ENCODE measurements at regions of chr11 and their contacts with region 1.

Region 1: DNA sequence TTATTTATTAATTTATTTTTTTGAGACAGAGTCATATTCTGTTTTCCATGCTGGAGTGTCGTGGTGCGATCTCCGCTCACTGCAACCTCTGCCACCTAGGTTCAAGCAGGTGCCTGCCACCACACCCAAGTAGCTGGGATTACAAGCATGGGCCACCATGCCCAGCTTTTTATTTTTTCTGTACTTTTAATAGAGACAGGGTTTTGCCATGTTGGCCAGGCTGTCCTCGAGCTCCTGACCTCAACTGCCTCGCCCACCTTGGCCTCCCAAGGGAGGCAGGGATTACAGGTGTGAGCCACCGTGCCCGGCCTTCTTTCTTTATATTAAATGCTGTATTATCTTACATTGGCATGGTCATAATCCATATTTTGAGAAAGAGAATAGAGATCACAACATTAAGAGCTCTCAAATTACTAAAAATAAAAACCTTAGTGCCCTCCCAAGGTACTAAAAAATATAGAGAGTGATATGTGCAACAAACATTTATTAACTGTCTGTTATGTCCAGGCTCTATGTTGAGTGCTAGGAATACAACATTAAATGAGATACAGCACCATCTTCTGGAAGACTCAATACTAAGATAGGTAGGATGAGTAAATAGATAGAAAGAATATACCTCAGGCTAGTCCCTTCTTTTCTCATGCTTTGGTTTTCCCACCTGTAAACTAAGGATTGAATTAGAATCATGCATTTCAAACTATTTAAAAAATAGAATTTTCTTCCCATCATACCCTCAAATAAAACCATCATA is 84.1 kb downstream of the BBOX1 start:
- DNase-seq: no peak
- H3K4me3 ChIP-seq: no peak overlapping the region
- H3K27ac ChIP-seq: no peak overlapping the region
- H3K4me1 ChIP-seq: no peaks in the 10 kb centered on the region
- H3K27me3 ChIP-seq: no peaks in the 10 kb centered on the region
- CTCF ChIP-seq: no peak
- EP300 ChIP-seq: no peak
- POLR2A ChIP-seq: no peak

Region 2: GRCh38 chr11:26753723-26754504 is 370.8 kb before region 1 on chr11:
- in situ Hi-C with region 1: loop called in 1 of 4 experiments (anchors 10 kb)
- intact Hi-C with region 1: no loop called
- DNase-seq: peak; percentile 35
- H3K4me3 ChIP-seq: no peak overlapping the region
- H3K27ac ChIP-seq: no peak overlapping the region
- H3K4me1 ChIP-seq: peaks cover 0 to 12% (median 2%) of the 10 kb centered on the region in 4 donors
- H3K27me3 ChIP-seq: no peaks in the 10 kb centered on the region
- CTCF ChIP-seq: peak; percentile 57 to 72 (median 66)
- EP300 ChIP-seq: no peak
- POLR2A ChIP-seq: no peak

Measured in transverse colon (tissue), 4 donors.